Right cardiac atrium (tissue), 5 donors: ENCODE measurements at regions of chr11 and their contacts with region 1.

Region 1: GRCh38 chr11:22787551-22788162 is 41.9 kb downstream of the SVIP start:
- DNase-seq: no peak
- ATAC-seq: no peak
- H3K4me3 ChIP-seq: no peak overlapping the region
- H3K27ac ChIP-seq: no peak overlapping the region
- H3K4me1 ChIP-seq: no peaks in the 10 kb centered on the region
- H3K27me3 ChIP-seq: no peaks in the 10 kb centered on the region

Region 2: DNA sequence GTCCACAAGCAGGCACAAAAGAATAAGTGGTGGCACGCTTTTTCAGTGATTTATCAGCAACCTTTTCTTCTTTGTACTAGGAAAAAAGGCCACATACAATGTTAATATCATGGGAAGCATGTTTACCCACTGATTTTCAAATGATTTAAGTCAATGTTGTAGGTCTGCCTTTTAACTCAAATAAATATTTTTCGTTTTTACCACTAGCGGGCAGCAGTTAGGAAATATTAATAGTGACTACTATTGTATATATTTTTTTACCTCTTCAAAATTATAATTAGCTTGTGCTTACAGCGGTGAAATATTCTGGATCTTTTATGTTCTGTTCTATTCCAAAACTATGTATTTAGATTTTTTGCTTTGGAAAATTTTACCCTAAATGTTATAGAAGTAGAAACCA is 455.9 kb before region 1 on chr11:
- intact Hi-C with region 1: loop called in 3 of 4 experiments (anchors 5 kb)
- DNase-seq: no peak
- ATAC-seq: no peak
- H3K4me3 ChIP-seq: no peak overlapping the region
- H3K27ac ChIP-seq: no peak overlapping the region
- H3K4me1 ChIP-seq: no peaks in the 10 kb centered on the region
- H3K27me3 ChIP-seq: no peaks in the 10 kb centered on the region

Region 3: GRCh38 chr11:22337596-22338485 is 449.8 kb before region 1 on chr11 and contains the start of gene SLC17A6:
- intact Hi-C with region 1: loop called in 3 of 4 experiments (anchors 5 kb)
- DNase-seq: no peak
- ATAC-seq: peak; percentile 28 to 31
- H3K4me3 ChIP-seq: no peak within 1 kb of the TSS
- H3K27ac ChIP-seq: no peak within 1 kb of the TSS
- H3K4me1 ChIP-seq: no peaks in the 10 kb centered on the region
- H3K27me3 ChIP-seq: no peaks in the 10 kb centered on the region
- total RNA-seq, gene SLC17A6: not detected